ENCODE measurements at regions of chr10 and their contacts with region 1.

Region 1: DNA sequence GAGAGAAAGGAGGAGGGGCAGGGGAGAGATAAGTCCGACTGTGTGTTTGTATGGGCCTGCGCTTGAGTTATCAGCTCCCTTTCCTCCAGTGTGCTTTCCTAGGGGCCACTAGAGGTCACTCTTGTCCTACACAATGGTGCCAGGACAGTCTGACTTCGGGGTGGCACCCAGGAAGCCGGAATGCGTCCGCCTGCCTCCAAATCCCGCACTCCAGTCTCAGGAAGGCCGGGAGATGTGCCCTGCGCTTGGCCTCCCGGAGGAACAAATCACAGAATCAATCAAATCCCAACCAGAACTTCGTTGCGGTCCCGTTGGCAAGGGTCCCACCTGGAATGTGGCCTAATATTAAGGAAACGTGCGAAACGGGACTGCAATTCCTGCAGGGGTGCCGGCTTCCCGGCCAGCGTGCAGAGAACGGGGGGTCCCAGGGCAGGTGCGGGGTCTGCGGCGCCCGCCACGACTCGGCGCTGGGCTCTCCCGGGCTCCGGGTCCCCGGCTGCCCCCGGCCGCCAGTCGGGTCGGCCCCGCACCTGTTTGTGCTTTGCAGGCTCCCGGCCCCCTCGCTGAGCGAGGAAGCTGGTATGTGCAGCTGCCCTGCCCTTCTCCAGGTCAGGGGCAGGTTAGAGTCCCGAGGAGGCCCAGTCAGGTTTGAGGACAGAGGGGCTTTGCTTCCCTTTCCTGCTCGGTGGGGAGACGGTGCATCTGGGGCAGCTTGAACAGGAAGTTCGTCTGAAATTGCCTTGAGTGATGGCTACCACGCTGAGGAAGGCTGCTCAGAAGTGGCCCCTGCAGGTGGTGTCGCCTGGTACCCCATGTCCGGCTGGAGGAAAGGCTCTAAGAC is 21.0 kb upstream of the HPS1 start:
- DNase-seq: peak; percentile 81
- ATAC-seq: peak; percentile 95

Region 2: DNA sequence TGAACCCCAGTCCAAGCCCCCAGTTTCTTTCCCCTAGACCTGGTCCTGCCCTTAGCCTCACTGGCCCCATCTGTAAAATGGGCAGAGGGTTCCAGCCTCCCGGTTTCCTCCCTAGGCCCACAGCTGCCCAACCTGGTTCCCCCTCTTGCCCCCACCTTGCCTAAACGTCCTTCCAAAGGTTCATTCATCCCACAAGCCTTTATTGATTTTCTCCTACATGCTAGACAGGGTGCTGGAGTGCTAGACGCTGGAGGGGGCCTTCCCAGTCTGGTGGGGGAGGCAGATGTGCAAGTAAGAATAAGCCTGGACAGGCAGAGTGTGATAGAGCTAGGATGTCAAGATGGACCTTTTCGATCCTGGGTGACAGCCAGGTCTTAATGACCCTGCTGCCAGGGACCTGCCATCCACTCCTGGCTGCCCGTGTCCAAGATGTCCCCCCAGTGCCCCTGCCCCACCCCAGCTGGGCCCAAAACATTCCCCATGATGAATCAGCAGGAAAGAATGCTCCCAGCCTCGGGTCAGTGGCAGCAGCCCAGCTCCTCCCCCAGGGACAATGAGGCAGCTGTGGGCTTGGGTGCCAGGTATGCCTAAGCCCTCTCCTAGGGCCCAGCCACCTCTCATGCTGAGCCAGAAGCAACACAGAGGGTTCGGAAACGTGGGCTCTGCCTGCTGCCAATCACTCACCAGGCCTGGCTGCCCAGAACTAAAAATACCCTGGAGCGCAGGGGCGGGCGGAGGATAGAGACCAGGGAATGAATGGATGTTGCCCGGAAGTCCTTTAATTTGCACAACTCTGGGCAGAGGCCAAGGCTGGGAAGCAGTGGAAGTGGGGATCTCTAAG is 198.4 kb before region 1 on chr10:
- intact Hi-C with region 1: loop called (anchors 5 kb)
- DNase-seq: peak; percentile 87
- ATAC-seq: peak; percentile 92

Region 3: DNA sequence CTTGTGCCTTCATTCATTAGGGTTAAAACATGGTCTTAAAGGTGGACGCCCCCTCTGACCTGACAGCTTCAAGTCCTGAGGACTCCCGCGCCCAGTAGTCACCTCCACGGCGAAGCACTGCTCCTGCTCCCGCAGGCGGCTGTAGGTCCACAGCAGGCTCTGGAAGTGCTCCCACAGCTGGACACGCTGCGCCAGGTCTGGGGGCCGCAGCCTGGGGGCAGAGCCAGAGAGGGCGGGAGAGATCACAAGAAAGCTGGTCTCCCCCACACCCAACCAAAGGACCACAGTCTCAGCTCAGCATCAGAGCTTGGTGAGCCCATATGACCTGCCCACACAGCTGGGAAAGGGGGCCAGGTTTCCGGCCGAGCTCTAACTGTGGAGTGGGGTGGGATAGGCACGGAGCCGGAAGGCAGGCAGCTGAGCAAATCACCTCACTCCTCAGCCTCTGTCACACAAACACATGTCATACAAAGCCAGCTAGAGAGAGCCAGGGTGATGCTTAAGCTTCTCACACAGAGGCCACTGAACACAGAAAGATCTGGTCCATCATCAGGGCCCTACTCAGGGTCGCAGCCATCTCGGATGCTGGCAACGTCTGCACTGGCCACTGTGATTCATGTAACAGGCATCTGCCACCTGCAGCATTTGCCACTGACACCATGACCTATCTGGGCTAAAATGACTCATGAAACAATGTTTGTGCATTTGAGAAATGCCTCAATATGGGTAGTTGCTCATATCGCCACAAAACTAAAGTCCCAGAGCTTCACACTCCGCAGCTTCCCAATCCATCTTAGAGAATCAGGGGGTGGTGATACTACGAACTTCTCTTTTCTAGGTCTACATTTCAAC is 33.6 kb before region 1 on chr10:
- intact Hi-C with region 1: no loop called
- DNase-seq: no peak
- ATAC-seq: no peak

Region 4: DNA sequence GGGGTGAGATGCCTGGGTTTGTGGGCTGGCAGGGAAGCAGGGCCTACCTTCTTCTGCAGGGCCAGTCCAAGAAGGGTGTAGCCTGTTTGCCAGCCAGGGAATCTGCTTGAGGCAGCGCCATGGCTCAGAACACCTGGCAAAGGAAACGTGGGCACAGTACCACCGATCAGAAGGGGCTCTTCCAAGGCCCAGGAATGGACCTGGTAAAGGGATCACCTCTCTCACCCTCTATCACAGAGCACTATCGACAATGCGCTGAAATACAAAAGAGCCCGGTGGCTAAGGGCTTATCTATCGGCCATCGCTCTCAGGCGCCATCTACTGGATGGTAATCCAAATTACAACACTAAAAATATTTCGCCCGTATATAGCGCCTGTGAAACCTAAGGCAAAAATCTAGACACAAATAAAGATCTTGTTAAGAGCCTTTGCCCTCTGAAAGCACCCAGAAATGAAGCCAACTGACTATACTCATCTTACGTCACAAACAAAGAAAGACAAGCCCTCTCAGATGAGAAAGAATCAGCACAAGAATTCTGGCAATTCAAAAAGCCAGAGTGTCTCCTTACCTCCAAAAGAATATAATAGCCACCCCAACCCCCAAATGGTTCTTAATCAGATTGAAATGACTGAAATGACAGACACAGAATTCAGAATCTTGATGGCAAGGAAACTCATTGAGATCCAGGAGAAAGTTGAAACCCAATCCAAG is 196.8 kb after region 1 on chr10:
- intact Hi-C with region 1: loop called (anchors 2 kb)
- DNase-seq: no peak
- ATAC-seq: no peak

Region 5: DNA sequence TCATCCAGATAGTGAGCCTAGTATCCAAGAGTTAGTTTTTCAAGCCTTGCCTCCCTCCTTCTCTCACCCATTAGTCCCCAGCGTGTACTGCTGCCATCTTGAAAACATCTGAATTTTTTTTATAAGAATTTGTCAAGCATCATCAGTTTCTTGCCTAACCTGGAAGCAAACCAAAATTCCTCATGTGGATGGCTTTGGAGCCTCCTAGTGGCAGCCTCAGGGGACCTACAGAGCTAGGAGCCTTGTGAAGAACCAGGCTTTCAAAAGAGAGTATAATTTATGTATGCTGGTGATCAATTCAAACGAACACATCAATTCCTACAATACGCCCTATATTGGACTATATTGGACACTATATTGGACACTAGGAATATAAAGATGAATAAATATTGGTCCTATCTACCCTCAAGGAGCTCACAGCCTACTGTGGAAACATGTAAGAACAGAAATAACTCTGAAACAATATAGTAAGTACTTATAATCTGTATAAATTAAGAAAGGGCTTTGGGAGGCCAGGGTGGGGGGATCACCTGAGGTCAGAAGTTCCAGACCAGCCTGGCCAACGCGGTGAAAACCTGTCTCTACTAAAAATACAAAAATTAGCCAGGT is 704.5 kb after region 1 on chr10:
- intact Hi-C with region 1: loop called (anchors 5 kb)
- DNase-seq: no peak
- ATAC-seq: no peak

Region 6: GRCh38 chr10:99248824-99249223 is 781.1 kb after region 1 on chr10:
- intact Hi-C with region 1: loop called (anchors 2 kb)
- DNase-seq: no peak
- ATAC-seq: no peak